Activated CD4-positive, alpha-beta memory T cell treated with anti-CD3 and anti-CD28 coated beads for 36 hours (primary cell): ENCODE measurements at regions of chr11 and their contacts with region 1.

Region 1: GRCh38 chr11:122853971-122854446 is 15.7 kb downstream of the CRTAM start:
- DNase-seq: peak; percentile 28
- H3K4me3 Mint-ChIP-seq: no peak overlapping the region
- H3K27ac Mint-ChIP-seq: no peak overlapping the region
- H3K4me1 Mint-ChIP-seq: peaks cover 42% of the 10 kb centered on the region
- H3K27me3 Mint-ChIP-seq: peaks cover 1% of the 10 kb centered on the region

Region 2: DNA sequence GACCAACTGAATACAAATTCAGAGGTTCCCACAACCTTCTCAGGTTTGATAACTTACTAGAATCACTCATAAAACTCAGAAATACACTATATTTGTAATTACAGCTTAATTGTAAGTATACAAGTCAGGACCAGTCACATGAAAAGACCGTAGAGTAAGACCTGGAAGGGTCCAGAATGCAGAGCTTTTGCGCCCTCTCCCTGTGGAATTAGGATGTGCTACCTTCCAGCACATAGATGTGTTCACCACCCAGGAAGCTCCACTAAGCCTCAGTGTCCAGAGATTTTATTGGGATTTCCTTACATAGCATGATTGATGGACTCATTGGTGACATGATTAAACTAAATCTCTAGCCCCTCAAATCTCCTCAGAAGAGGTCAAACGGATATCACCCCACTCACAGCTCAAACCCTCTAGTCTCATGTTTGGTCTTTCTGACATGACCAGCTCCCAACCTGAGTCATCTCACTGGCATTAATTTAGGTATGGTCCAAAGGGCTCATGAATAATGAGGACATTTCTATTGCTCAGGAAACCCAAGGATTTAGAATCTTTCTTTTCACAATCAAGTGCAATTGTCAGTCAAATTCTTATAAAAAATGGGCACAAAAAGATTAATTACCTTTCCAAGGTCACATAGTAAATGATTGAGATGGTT is 275.7 kb before region 1 on chr11:
- CTCF ChIA-PET with region 1: interaction called, 56 read pairs
- POLR2A ChIA-PET with region 1: interaction called, 3 read pairs
- intact Hi-C with region 1: loop called (anchors 1 kb)
- DNase-seq: no peak
- H3K4me3 Mint-ChIP-seq: no peak overlapping the region
- H3K27ac Mint-ChIP-seq: no peak overlapping the region
- H3K4me1 Mint-ChIP-seq: peaks cover 8% of the 10 kb centered on the region
- H3K27me3 Mint-ChIP-seq: peaks cover 2% of the 10 kb centered on the region

Region 3: DNA sequence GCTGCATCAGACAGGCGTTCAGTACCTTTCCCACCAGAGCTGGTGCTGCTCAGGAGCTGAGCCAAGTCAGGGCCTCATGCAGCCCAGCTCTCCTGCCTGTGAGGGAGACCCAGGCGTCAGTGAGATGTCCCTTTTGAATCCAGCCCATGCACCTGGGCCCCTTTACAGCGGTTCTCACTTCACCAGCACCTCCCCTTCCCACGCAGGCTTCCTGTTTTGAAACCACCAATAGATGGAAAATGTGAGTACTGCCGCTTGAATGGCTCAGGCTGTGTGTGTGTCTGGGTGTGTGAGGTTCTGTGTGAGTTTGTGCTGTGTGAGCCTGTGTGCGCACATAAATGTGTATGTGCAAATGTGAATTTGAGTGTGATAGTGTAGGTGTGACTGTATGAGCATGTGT is 110.1 kb before region 1 on chr11:
- CTCF ChIA-PET with region 1: interaction called, 5 read pairs
- POLR2A ChIA-PET with region 1: interaction called, 4 read pairs
- intact Hi-C with region 1: loop called (anchors 1 kb)
- DNase-seq: peak; percentile 91
- H3K4me3 Mint-ChIP-seq: no peak overlapping the region
- H3K27ac Mint-ChIP-seq: no peak overlapping the region
- H3K4me1 Mint-ChIP-seq: peaks cover 14% of the 10 kb centered on the region
- H3K27me3 Mint-ChIP-seq: no peaks in the 10 kb centered on the region

Region 4: DNA sequence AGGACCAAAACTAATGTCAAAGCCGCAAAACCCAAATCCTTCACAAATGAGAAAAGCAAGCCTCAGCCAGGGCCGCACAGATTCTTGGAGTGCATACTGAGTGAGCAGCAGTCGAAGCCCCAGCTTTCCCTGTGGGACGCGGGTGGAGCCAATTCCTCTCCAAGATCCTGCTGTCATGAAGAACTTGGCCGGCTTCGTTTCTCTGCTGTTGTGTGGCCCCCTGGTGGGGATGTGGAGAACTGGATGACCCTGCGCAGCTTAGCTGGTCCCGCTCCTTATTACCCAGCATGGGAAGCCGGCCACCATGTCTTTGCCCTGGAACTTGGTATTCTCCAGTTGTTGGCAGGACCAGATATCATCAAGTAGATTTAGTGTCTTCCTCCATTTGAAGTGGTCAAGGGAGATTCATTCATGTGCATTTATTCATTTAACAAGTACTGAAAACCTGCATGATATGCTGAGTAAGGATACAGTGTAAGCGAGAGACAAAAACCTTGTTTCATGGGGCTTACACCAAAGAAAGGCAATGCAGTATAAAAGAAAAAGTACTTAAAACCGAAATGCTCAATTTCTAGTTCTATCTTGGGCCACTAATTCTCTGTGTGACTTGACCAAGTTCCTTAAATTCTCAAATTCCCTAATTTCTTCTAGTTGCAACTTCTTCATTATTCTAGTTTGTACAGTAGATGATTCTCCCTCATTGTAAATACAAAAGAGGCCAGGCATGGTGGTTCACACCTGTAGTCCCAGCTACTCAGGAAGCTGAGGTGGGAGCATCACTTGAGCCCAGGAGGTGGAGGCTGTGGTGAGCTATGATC is 72.4 kb before region 1 on chr11:
- CTCF ChIA-PET with region 1: interaction called, 36 read pairs
- POLR2A ChIA-PET with region 1: no interaction called
- intact Hi-C with region 1: no loop called
- DNase-seq: peak; percentile 84
- H3K4me3 Mint-ChIP-seq: no peak overlapping the region
- H3K27ac Mint-ChIP-seq: no peak overlapping the region
- H3K4me1 Mint-ChIP-seq: peaks cover 23% of the 10 kb centered on the region
- H3K27me3 Mint-ChIP-seq: no peaks in the 10 kb centered on the region

Region 5: DNA sequence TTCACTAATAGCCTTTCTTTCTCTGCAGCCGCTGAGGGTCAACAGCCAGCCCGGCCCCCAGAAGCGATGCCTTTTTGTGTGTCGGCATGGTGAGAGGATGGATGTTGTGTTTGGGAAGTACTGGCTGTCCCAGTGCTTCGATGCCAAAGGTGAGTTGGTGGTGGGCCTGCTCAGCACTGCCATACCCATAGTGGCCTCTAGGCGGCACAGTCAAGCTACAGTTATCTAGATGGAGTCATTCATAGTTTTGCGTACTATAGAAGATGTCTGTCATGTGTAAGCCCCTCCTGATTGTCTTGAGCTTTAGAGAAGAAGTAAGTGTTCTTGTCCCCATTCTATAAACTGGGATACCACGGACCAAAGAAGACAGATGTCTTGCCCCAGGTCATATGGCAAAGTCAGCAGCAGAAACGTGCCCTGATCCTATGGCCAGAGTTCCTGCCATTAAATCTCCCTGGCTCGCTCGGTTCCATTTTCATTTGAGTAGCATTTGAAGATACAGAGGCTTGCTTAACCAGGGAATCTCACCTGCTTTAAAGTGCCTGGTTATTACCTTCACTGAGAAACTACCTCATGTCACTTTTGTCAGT is 57.8 kb before region 1 on chr11:
- CTCF ChIA-PET with region 1: interaction called, 118 read pairs
- POLR2A ChIA-PET with region 1: no interaction called
- intact Hi-C with region 1: loop called (anchors 1 kb)
- DNase-seq: peak; percentile 76
- H3K4me3 Mint-ChIP-seq: no peak overlapping the region
- H3K27ac Mint-ChIP-seq: no peak overlapping the region
- H3K4me1 Mint-ChIP-seq: no peaks in the 10 kb centered on the region
- H3K27me3 Mint-ChIP-seq: no peaks in the 10 kb centered on the region

Region 6: GRCh38 chr11:122814401-122814800 is 39.6 kb before region 1 on chr11:
- CTCF ChIA-PET with region 1: interaction called, 38 read pairs
- POLR2A ChIA-PET with region 1: no interaction called
- intact Hi-C with region 1: loop called (anchors 1 kb)
- DNase-seq: no peak
- H3K4me3 Mint-ChIP-seq: no peak overlapping the region
- H3K27ac Mint-ChIP-seq: no peak overlapping the region
- H3K4me1 Mint-ChIP-seq: peaks cover 9% of the 10 kb centered on the region
- H3K27me3 Mint-ChIP-seq: no peaks in the 10 kb centered on the region

Region 7: DNA sequence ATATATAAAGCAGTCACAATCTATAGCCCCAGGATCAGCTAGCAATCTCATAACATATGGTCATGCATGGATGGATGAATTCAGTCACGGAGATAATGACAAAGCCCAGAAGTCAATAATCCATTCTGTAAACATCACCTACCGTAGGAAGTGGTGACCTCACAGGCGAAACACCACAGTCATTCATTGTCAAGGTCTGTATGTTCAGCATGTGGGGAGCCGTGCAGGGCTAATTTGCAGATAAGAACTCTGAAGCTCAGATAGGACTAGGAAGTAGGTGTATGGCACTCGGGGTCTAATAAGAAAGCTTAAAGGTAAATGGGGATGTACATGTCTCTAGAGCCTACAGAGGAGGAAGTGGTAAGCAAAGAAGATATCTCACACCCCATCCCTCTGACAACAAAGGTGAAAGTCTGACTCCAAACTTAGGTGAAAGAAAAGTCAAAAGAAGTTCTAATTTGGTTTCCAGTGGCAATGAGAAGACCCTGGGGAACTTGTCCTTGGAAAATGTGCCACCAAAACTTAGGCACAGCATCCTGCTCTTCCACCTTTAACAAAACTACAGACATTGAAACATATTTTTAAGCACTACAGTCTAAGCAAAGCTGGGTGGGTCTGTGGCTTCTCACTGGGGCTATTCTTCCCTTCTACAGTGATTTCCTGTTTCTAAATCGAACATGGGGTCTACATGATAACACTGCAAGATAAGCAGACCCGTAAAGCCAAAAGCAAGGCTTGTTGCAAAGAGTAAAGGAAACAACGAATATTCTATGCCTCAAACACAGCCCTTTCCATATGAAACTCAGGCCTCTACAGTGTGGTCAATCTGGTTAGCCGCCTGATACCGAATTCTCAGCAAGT is 10.5 kb before region 1 on chr11:
- CTCF ChIA-PET with region 1: interaction called, 20 read pairs
- POLR2A ChIA-PET with region 1: interaction called, 4 read pairs
- intact Hi-C with region 1: no loop called
- DNase-seq: peak; percentile 58
- H3K4me3 Mint-ChIP-seq: no peak overlapping the region
- H3K27ac Mint-ChIP-seq: no peak overlapping the region
- H3K4me1 Mint-ChIP-seq: peaks cover 15% of the 10 kb centered on the region
- H3K27me3 Mint-ChIP-seq: no peaks in the 10 kb centered on the region

Region 8: GRCh38 chr11:123166071-123166559 is 312.1 kb after region 1 on chr11:
- CTCF ChIA-PET with region 1: no interaction called
- POLR2A ChIA-PET with region 1: no interaction called
- intact Hi-C with region 1: no loop called
- DNase-seq: peak; percentile 38
- H3K4me3 Mint-ChIP-seq: no peak overlapping the region
- H3K27ac Mint-ChIP-seq: no peak overlapping the region
- H3K4me1 Mint-ChIP-seq: no peaks in the 10 kb centered on the region
- H3K27me3 Mint-ChIP-seq: no peaks in the 10 kb centered on the region